ENCODE measurements at regions of chr2 and their contacts with region 1.

Region 1: GRCh38 chr2:237858294-237859081 is 935 bp upstream of the RAMP1 start:
- DNase-seq: peak; percentile 69 to 71
- H3K4me3 ChIP-seq: peak overlapping the region; percentile 44
- H3K4me3 Mint-ChIP-seq: peak overlapping the region; percentile 67
- H3K27ac Mint-ChIP-seq: no peak overlapping the region
- H3K4me1 ChIP-seq: peaks cover 28% of the 10 kb centered on the region
- H3K4me1 Mint-ChIP-seq: peaks cover 6% of the 10 kb centered on the region
- H3K27me3 ChIP-seq: no peaks in the 10 kb centered on the region
- H3K27me3 Mint-ChIP-seq: peaks cover 7% of the 10 kb centered on the region
- CTCF ChIP-seq: peak; percentile 66 to 77

Region 2: GRCh38 chr2:237923481-237924163 is 65.1 kb after region 1 on chr2:
- CTCF ChIA-PET with region 1: no interaction called
- POLR2A ChIA-PET with region 1: no interaction called
- intact Hi-C with region 1: loop called (anchors 1 kb)
- DNase-seq: peak; percentile 49 to 84
- H3K4me3 ChIP-seq: peak overlapping the region; percentile 16
- H3K4me3 Mint-ChIP-seq: peak overlapping the region; percentile 23
- H3K27ac Mint-ChIP-seq: no peak overlapping the region
- H3K4me1 ChIP-seq: no peaks in the 10 kb centered on the region
- H3K4me1 Mint-ChIP-seq: peaks cover 7% of the 10 kb centered on the region
- H3K27me3 ChIP-seq: no peaks in the 10 kb centered on the region
- H3K27me3 Mint-ChIP-seq: no peaks in the 10 kb centered on the region
- CTCF ChIP-seq: peak; percentile 67 to 86

Region 3: GRCh38 chr2:238101891-238102835 is 243.7 kb after region 1 on chr2:
- CTCF ChIA-PET with region 1: interaction called, 3 read pairs
- POLR2A ChIA-PET with region 1: no interaction called
- intact Hi-C with region 1: loop called (anchors 2 kb)
- DNase-seq: no peak
- H3K4me3 ChIP-seq: no peak overlapping the region
- H3K4me3 Mint-ChIP-seq: no peak overlapping the region
- H3K27ac Mint-ChIP-seq: no peak overlapping the region
- H3K4me1 ChIP-seq: no peaks in the 10 kb centered on the region
- H3K4me1 Mint-ChIP-seq: no peaks in the 10 kb centered on the region
- H3K27me3 ChIP-seq: no peaks in the 10 kb centered on the region
- H3K27me3 Mint-ChIP-seq: no peaks in the 10 kb centered on the region
- CTCF ChIP-seq: no peak

Region 4: GRCh38 chr2:238158527-238159070 is 300.1 kb after region 1 on chr2 and contains the start of gene ERFE:
- CTCF ChIA-PET with region 1: no interaction called
- POLR2A ChIA-PET with region 1: no interaction called
- intact Hi-C with region 1: loop called (anchors 10 kb)
- DNase-seq: peak in 1 of 2 experiments; percentile 73
- H3K4me3 ChIP-seq: peak within 1 kb of the TSS; percentile 29
- H3K4me3 Mint-ChIP-seq: peak within 1 kb of the TSS; percentile 64
- H3K27ac Mint-ChIP-seq: no peak within 1 kb of the TSS
- H3K4me1 ChIP-seq: no peaks in the 10 kb centered on the region
- H3K4me1 Mint-ChIP-seq: no peaks in the 10 kb centered on the region
- H3K27me3 ChIP-seq: no peaks in the 10 kb centered on the region
- H3K27me3 Mint-ChIP-seq: no peaks in the 10 kb centered on the region
- CTCF ChIP-seq: peak; percentile 21 to 45
- total RNA-seq, gene ERFE: 1.4 and 1.6 TPM in 2 replicates